ENCODE measurements at regions of chr1 and their contacts with region 1.

Region 1: GRCh38 chr1:7042322-7043190 is 257.3 kb downstream of the CAMTA1 start:
- DNase-seq: peak; percentile 57
- ATAC-seq: peak; percentile 56; the same call in 1 of the 2 replicates
- H3K4me3 ChIP-seq: no peak overlapping the region
- H3K27ac ChIP-seq: no peak overlapping the region
- H3K4me1 ChIP-seq: no peaks in the 10 kb centered on the region
- H3K27me3 ChIP-seq: peaks cover 13% of the 10 kb centered on the region
- CTCF ChIP-seq: peak; percentile 63
- POLR2A ChIP-seq: no peak
- RAD21 ChIP-seq: peak; percentile 70

Region 2: DNA sequence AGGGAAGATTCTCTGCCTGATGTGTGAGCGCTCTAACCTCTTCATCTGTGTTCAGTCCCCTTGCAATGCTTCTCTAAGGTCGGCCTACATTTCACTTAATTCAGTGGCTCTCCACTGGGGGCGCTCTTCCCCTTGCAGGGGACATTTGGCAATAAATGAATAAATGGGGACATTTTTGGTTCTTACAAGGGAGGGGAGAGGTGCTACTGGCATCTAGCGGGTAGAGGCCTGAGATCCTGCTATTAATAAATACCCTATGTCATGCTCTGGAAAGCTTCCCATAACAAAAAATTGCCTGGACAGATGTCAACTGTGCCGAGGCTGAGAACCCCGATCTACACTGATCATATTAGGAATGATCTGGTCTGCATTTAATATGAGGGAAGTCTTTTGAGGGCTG is 315.0 kb before region 1 on chr1:
- CTCF ChIA-PET with region 1: no interaction called
- POLR2A ChIA-PET with region 1: no interaction called
- dilution Hi-C with region 1: no loop called
- in situ Hi-C with region 1: no loop called
- intact Hi-C with region 1: loop called (anchors 10 kb)
- DNase-seq: peak; percentile 54
- ATAC-seq: peak; percentile 22; the same call in 1 of the 2 replicates
- H3K4me3 ChIP-seq: no peak overlapping the region
- H3K27ac ChIP-seq: no peak overlapping the region
- H3K4me1 ChIP-seq: peaks cover 9% of the 10 kb centered on the region
- H3K27me3 ChIP-seq: peaks cover 3% of the 10 kb centered on the region; the same call in 1 of the 2 replicates
- CTCF ChIP-seq: peak; percentile 79
- POLR2A ChIP-seq: no peak
- RAD21 ChIP-seq: peak; percentile 66

Region 3: DNA sequence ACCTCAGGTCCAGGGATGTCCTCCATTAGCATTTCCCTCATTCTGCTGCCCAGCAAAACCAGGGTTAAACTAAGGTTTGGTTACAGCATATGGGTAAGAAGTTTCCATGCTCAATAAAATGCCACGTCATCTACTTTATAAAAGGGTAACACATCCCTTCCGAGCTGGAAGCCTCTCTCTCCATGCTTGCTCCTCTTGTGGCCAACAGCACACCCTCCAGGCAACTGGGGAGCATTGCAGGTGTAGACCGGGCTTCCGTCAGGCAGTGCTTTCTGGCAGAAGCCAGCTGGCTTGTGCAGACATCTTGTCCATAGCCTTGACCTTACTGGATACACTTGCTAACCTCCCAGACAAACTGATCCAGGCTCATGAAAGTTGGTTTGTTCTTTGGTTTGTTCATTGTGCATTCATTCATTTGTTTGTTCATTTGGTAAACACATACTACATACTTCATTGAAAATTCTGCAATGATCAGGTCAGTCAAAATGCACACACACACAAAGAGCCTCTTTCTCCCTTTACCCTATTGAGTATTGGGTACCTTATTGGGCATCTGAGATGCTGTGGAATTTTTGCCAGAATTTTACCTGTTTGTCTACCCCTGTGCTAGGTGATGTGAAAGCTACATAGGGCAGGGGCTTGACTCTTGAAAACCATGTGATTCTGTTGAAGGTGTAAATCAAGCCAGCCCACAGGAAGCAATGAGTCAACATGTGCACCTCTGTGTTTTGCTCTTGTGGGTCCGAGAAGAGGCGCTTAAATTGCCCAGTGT is 165.5 kb after region 1 on chr1:
- CTCF ChIA-PET with region 1: interaction called, 10 read pairs
- POLR2A ChIA-PET with region 1: no interaction called
- dilution Hi-C with region 1: no loop called
- in situ Hi-C with region 1: no loop called
- intact Hi-C with region 1: loop called (anchors 2 kb)
- DNase-seq: peak; percentile 73
- ATAC-seq: peak; percentile 89
- H3K4me3 ChIP-seq: no peak overlapping the region
- H3K27ac ChIP-seq: no peak overlapping the region
- H3K4me1 ChIP-seq: no peaks in the 10 kb centered on the region
- H3K27me3 ChIP-seq: no peaks in the 10 kb centered on the region
- CTCF ChIP-seq: peak; percentile 65
- POLR2A ChIP-seq: 0 out of 2 replicates have a peak, but pooled peaks have one; percentile 25
- RAD21 ChIP-seq: peak; percentile 86